Motor neuron (in vitro differentiated cells): ENCODE measurements at regions of chr1 and their contacts with region 1.

Region 1: GRCh38 chr1:184036517-184036949 is 995 bp downstream of the COLGALT2 start:
- ATAC-seq: peak; percentile 50 to 68 (median 63)
- H3K4me3 ChIP-seq: peak overlapping the region; percentile 53 to 81 (median 64)
- H3K27ac ChIP-seq: peak overlapping the region in 1 of 2 donors; percentile 67
- H3K4me1 ChIP-seq: peaks cover 11 to 17% of the 10 kb centered on the region in 2 donors

Region 2: GRCh38 chr1:183942933-183943693 is 93.4 kb before region 1 on chr1:
- in situ Hi-C with region 1: loop called in 2 of 9 experiments (anchors 25 kb)
- ATAC-seq: peak; percentile 59 to 95 (median 88)
- H3K4me3 ChIP-seq: no peak overlapping the region
- H3K27ac ChIP-seq: peak overlapping the region; percentile 15 to 71
- H3K4me1 ChIP-seq: peaks cover 36 to 41% of the 10 kb centered on the region in 2 donors